Caco-2 (cell line): ENCODE measurements at regions of chr17 and their contacts with region 1.

Region 1: DNA sequence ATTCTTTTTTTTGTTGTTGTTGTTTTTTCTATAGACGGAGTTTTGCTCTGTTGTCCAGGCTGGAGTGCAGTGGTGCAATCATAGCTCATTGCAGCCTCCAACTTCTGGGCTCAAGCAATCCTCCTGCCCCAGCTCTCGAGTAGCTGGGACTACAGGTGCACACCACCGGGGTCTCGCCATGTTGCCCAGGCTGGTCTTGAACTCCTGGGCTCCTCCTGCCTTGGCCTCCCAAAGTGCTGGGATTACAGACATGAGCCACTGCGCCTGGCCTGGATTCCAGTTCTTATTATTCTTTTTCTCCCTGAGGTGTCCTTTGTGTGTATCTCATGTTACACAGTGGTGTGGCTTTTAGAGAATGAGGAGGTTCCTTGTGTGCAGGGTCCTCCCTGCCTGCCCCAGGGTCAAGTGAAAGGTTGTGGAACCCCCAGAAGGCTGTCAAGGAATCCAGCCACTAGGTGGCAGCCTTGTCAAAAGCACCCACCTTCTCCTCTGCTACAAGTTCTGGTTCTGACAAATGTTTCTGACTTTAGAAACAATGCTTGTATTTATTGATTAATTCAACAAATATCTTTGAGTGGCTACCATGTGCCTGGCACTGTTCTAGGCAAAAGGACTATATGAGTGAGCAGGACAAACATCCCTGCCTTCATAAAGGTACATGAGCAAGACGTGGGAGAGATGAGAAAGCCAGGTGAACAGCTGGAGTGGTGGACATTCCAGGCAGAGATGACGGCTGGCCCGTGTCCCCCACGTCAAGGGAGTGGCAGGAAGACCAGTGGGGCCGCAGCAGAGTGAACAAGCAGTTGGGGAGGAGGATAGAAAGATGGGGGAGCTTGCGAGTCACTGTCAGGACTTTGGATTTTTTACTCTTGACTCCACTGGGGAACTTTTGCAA is 112.4 kb downstream of the SPECC1 start:
- DNase-seq: peak; percentile 65 to 76
- H3K4me3 ChIP-seq: no peak overlapping the region
- H3K4me3 Mint-ChIP-seq: no peak overlapping the region
- H3K27ac Mint-ChIP-seq: peak overlapping the region; percentile 5
- H3K4me1 ChIP-seq: no peaks in the 10 kb centered on the region
- H3K4me1 Mint-ChIP-seq: peaks cover 10% of the 10 kb centered on the region
- H3K27me3 ChIP-seq: no peaks in the 10 kb centered on the region
- H3K27me3 Mint-ChIP-seq: peaks cover 6% of the 10 kb centered on the region
- CTCF ChIP-seq: peak; percentile 91 to 97

Region 2: GRCh38 chr17:19992803-19993713 is 128.5 kb before region 1 on chr17:
- CTCF ChIA-PET with region 1: interaction called, 15 read pairs
- POLR2A ChIA-PET with region 1: no interaction called
- intact Hi-C with region 1: loop called (anchors 1 kb)
- DNase-seq: peak; percentile 93
- H3K4me3 ChIP-seq: no peak overlapping the region
- H3K4me3 Mint-ChIP-seq: peak overlapping the region; percentile 66
- H3K27ac Mint-ChIP-seq: peak overlapping the region; percentile 71
- H3K4me1 ChIP-seq: peaks cover 4% of the 10 kb centered on the region; the same call in 1 of the 2 replicates
- H3K4me1 Mint-ChIP-seq: peaks cover 7% of the 10 kb centered on the region
- H3K27me3 ChIP-seq: no peaks in the 10 kb centered on the region
- H3K27me3 Mint-ChIP-seq: no peaks in the 10 kb centered on the region
- CTCF ChIP-seq: peak; percentile 76 to 80

Region 3: DNA sequence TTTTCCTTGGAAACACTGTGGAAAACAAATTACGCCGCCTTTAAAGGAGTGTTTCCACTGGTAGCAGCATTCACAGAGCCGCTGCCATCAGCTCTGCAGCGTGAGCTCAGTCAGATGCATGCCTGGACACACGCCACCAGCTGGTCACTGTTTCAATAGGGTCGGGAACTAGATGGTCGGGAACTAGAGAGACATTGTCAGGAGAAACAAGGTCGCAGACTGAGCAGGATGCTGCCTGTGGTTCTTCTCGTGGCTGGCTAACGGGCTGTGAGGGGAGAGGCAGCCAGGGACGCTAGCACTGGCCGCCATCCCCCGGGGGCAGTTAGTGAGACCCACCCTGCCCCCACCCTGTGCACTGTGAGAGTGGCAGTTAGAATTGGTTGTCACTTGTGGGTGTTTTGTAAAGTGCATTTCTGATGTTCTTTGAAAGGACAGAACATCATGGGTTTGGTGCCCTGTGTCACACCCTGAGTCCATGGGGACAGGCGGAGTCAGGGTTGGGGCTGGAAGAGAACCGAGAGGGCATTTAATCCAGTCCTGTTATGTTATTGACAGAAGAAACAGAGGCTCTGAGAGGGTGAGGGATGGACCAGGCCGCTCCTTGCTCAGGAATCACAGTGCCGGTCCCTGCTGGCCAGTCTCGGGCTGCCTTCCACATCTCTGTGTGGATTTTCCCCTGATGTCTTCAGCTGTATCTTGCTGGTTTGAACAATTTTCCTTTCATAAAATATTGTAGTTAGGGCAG is 26.1 kb before region 1 on chr17:
- CTCF ChIA-PET with region 1: no interaction called
- POLR2A ChIA-PET with region 1: no interaction called
- intact Hi-C with region 1: no loop called
- DNase-seq: peak; percentile 64 to 69
- H3K4me3 ChIP-seq: no peak overlapping the region
- H3K4me3 Mint-ChIP-seq: peak overlapping the region; percentile 22
- H3K27ac Mint-ChIP-seq: no peak overlapping the region
- H3K4me1 ChIP-seq: no peaks in the 10 kb centered on the region
- H3K4me1 Mint-ChIP-seq: no peaks in the 10 kb centered on the region
- H3K27me3 ChIP-seq: no peaks in the 10 kb centered on the region; the same call in 1 of the 2 replicates
- H3K27me3 Mint-ChIP-seq: peaks cover 15% of the 10 kb centered on the region
- CTCF ChIP-seq: peak; percentile 24 to 78

Region 4: DNA sequence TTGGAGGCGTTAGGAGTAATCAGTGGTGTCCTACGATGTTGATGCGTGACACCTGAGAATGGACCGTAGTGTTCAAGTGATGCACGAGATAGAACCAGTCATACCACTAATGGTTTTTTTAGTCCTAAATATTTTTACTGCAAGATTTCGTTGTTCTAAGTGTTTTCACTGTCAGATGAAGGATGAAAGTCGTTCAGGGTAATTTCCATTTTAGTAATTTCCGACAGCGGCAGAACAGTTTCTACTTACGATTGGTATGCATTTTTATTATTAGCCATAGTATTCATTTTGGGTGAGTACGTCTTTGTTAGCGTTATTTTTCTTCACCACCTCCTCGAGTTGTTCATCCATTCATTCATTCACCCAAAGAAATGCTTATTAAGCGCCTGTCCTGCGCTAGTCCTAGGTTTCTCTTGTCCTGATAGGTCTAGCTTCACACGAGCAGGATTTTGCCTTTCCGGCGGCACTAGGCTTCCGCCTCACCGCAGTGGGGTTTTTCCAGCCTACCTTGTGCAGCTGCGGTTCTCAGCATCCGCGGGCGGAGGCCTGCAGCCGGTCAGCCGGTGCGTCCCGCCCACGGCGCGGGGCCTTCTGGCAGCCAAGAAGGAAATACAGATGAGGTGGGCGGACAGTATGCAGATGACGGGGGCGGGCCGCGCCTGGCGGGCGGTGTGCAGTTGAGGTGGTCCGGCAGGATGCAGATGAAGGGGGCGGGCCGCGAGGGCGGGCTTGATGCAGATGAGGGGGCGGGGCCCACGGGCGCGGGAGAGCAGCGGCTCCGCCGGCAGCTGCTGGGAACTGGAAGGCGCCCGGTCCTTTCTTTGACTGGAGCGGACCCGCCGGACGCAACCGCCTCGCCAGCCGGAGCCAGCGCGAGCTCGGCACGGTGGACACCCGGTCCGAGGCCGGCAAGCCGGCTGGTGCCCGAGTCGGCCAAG is 33.9 kb after region 1 on chr17:
- CTCF ChIA-PET with region 1: no interaction called
- POLR2A ChIA-PET with region 1: no interaction called
- intact Hi-C with region 1: loop called (anchors 2 kb)
- DNase-seq: peak; percentile 100
- H3K4me3 ChIP-seq: peak overlapping the region; percentile 93
- H3K4me3 Mint-ChIP-seq: no peak overlapping the region
- H3K27ac Mint-ChIP-seq: no peak overlapping the region
- H3K4me1 ChIP-seq: no peaks in the 10 kb centered on the region; the same call in 1 of the 2 replicates
- H3K4me1 Mint-ChIP-seq: peaks cover 11% of the 10 kb centered on the region
- H3K27me3 ChIP-seq: no peaks in the 10 kb centered on the region
- H3K27me3 Mint-ChIP-seq: no peaks in the 10 kb centered on the region
- CTCF ChIP-seq: no peak

Region 5: DNA sequence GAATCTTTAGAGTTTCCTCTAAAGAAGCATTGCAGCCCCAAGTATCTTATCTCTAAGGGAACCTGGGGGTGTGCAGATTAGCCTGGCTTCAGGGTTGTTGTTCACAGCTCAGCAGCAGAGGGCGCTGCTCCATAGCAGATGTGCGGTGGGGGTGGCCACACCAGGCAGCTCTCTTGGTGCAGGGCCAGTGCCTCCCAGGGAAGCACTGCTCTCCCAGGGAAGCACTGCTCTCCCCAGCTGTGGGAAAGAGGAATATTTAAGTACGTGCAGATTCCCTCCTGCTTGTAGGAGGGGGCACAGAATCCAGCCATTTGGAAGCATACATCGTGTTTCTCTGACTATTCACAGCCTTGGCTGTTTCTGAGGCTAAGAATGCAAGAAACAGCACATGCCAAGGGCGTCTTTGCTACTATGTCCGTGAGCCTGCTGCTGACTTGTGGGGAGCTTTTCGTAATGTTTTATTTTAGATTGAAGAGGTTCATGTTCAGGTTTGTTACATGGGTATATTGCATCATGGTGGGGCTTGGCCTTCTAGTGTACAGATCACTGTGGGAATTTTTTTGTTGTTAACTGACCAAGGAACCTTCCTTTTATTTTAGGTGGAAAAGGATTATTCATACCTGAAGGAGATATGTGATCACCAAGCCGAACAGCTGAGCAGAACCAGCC is 105.3 kb after region 1 on chr17:
- CTCF ChIA-PET with region 1: interaction called, 8 read pairs
- POLR2A ChIA-PET with region 1: no interaction called
- intact Hi-C with region 1: loop called (anchors 1 kb)
- DNase-seq: peak; percentile 74 to 83
- H3K4me3 ChIP-seq: no peak overlapping the region
- H3K4me3 Mint-ChIP-seq: no peak overlapping the region
- H3K27ac Mint-ChIP-seq: peak overlapping the region; percentile 50
- H3K4me1 ChIP-seq: peaks cover 25% of the 10 kb centered on the region
- H3K4me1 Mint-ChIP-seq: peaks cover 29% of the 10 kb centered on the region
- H3K27me3 ChIP-seq: no peaks in the 10 kb centered on the region
- H3K27me3 Mint-ChIP-seq: no peaks in the 10 kb centered on the region
- CTCF ChIP-seq: peak; percentile 83 to 89

Region 6: GRCh38 chr17:20260692-20261091 is 139.1 kb after region 1 on chr17:
- CTCF ChIA-PET with region 1: no interaction called
- POLR2A ChIA-PET with region 1: no interaction called
- intact Hi-C with region 1: loop called (anchors 1 kb)
- DNase-seq: peak in 1 of 2 experiments; percentile 5
- H3K4me3 ChIP-seq: no peak overlapping the region
- H3K4me3 Mint-ChIP-seq: no peak overlapping the region
- H3K27ac Mint-ChIP-seq: peak overlapping the region; percentile 31
- H3K4me1 ChIP-seq: no peaks in the 10 kb centered on the region
- H3K4me1 Mint-ChIP-seq: no peaks in the 10 kb centered on the region
- H3K27me3 ChIP-seq: no peaks in the 10 kb centered on the region
- H3K27me3 Mint-ChIP-seq: no peaks in the 10 kb centered on the region
- CTCF ChIP-seq: no peak